HCT116 (cell line): ENCODE measurements at regions of chr1 and their contacts with region 1.

Region 1: GRCh38 chr1:202235856-202236837 is 42.5 kb downstream of the LGR6 start:
- DNase-seq: peak; percentile 86
- ATAC-seq: peak; percentile 87
- H3K4me3 ChIP-seq: peak overlapping the region; percentile 26 to 46
- H3K27ac ChIP-seq: peak overlapping the region; percentile 37
- H3K4me1 ChIP-seq: peaks cover 25 to 30% of the 10 kb centered on the region in 2 experiments
- H3K27me3 ChIP-seq: peaks cover 12% of the 10 kb centered on the region; the same call in 1 of the 2 replicates
- CTCF ChIP-seq: peak; percentile 64 to 98 (median 95)
- POLR2A ChIP-seq: no peak
- RAD21 ChIP-seq: peak; percentile 35; the same call in 1 of the 2 replicates

Region 2: GRCh38 chr1:202192770-202193613 is 43.2 kb before region 1 on chr1:
- CTCF ChIA-PET with region 1: interaction called, 7 read pairs
- POLR2A ChIA-PET with region 1: no interaction called
- RAD21 ChIA-PET with region 1: no interaction called
- intact Hi-C with region 1: loop called (anchors 5 kb)
- DNase-seq: no peak
- ATAC-seq: peak; percentile 67
- H3K4me3 ChIP-seq: no peak overlapping the region
- H3K27ac ChIP-seq: no peak overlapping the region
- H3K4me1 ChIP-seq: no peaks in the 10 kb centered on the region
- H3K27me3 ChIP-seq: no peaks in the 10 kb centered on the region; the same call in 1 of the 2 replicates
- CTCF ChIP-seq: peak; percentile 83 to 96 (median 90)
- POLR2A ChIP-seq: no peak
- RAD21 ChIP-seq: peak; percentile 88

Region 3: GRCh38 chr1:202259705-202260104 is 23.6 kb after region 1 on chr1:
- CTCF ChIA-PET with region 1: no interaction called
- POLR2A ChIA-PET with region 1: no interaction called
- RAD21 ChIA-PET with region 1: no interaction called
- intact Hi-C with region 1: loop called (anchors 1 kb)
- DNase-seq: no peak
- ATAC-seq: no peak
- H3K4me3 ChIP-seq: no peak overlapping the region
- H3K27ac ChIP-seq: no peak overlapping the region
- H3K4me1 ChIP-seq: no peaks in the 10 kb centered on the region
- H3K27me3 ChIP-seq: peaks cover 52% of the 10 kb centered on the region
- CTCF ChIP-seq: no peak
- POLR2A ChIP-seq: no peak
- RAD21 ChIP-seq: no peak

Region 4: GRCh38 chr1:202274611-202275010 is 38.5 kb after region 1 on chr1:
- CTCF ChIA-PET with region 1: interaction called, 3 read pairs
- POLR2A ChIA-PET with region 1: no interaction called
- RAD21 ChIA-PET with region 1: no interaction called
- intact Hi-C with region 1: loop called (anchors 5 kb)
- DNase-seq: peak; percentile 22
- ATAC-seq: peak; percentile 91
- H3K4me3 ChIP-seq: no peak overlapping the region
- H3K27ac ChIP-seq: no peak overlapping the region
- H3K4me1 ChIP-seq: no peaks in the 10 kb centered on the region
- H3K27me3 ChIP-seq: peaks cover 25% of the 10 kb centered on the region
- CTCF ChIP-seq: peak; percentile 51 to 73 (median 69); a peak in 5 of 6 replicates
- POLR2A ChIP-seq: no peak
- RAD21 ChIP-seq: peak; percentile 68